Activated CD8-positive, alpha-beta memory T cell treated with anti-CD3 and anti-CD28 coated beads, Interleukin-2, amount 10 ng/mL, durations not matched to agents 7 days and 5 days (primary cell): ENCODE measurements at regions of chr1 and their contacts with region 1.

Region 1: DNA sequence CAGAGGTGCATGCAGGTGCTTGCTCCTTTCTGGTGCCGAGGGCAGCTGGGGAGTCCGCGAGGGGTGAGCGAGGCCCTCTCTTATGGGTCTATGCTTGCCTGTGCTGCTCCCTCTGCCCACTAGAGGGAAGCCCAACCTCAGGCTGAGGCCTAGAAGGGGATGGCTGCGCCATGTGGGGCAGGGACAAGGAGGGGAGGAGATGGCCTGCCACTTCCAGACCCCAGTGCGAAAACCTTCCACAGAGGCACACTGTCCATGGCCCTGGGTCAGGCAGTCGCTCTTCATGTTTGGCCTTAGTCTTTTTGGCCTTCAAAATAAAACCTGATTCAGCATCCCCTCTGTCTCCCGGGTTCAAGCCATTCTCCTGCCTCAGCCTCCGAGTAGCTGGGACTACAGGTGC is 14.0 kb downstream of the RHBG start:
- DNase-seq: peak; percentile 74
- ATAC-seq: peak; percentile 84
- H3K4me3 Mint-ChIP-seq: no peak overlapping the region
- H3K27ac Mint-ChIP-seq: no peak overlapping the region
- H3K4me1 Mint-ChIP-seq: peaks cover 6% of the 10 kb centered on the region
- H3K27me3 Mint-ChIP-seq: peaks cover 14% of the 10 kb centered on the region

Region 2: DNA sequence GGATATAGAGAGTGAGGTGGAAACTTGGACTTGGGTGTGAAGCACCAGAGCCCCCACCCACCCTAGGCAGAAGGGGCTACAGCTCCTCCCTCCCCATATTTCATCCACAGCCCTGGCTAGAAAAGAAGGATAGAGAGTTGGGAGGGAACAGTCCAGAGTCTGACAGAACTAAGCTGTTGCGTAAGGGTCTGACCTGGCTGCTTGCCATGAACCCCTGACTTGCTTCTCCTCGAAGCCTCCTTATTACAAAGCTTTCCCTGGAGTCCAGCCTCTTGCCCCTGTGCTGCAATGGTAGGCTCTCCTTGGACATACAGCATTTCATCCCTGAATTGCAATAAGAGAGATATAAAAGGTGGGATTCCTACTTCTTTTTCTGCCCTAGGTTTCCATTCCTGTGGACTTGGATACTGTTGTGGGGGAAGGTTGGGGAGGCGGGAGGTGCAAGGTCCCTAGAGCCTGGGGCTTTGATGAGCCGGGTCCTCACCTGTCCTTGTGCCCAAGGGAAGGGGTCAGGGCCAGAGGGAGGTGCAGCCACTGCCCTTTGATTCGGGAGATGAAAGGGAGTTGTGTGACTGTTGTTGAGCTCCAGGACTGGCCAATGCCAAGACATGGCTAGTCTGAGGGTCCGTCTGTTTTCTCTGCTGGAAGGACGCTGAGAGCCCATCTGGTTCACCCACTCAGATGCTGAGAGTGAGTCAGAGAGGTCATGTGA is 11.3 kb before region 1 on chr1:
- CTCF ChIA-PET with region 1: interaction called, 40 read pairs
- DNase-seq: no peak
- ATAC-seq: no peak
- H3K4me3 Mint-ChIP-seq: no peak overlapping the region
- H3K27ac Mint-ChIP-seq: no peak overlapping the region
- H3K4me1 Mint-ChIP-seq: peaks cover 3% of the 10 kb centered on the region
- H3K27me3 Mint-ChIP-seq: peaks cover 56% of the 10 kb centered on the region

Region 3: GRCh38 chr1:156414461-156415064 is 31.5 kb after region 1 on chr1:
- CTCF ChIA-PET with region 1: interaction called, 42 read pairs
- DNase-seq: no peak
- ATAC-seq: no peak
- H3K4me3 Mint-ChIP-seq: no peak overlapping the region
- H3K27ac Mint-ChIP-seq: no peak overlapping the region
- H3K4me1 Mint-ChIP-seq: peaks cover under 1% of the 10 kb centered on the region
- H3K27me3 Mint-ChIP-seq: peaks cover 65% of the 10 kb centered on the region

Region 4: GRCh38 chr1:156445789-156446263 is 62.8 kb after region 1 on chr1:
- CTCF ChIA-PET with region 1: interaction called, 463 read pairs
- DNase-seq: peak; percentile 86
- ATAC-seq: peak; percentile 84
- H3K4me3 Mint-ChIP-seq: no peak overlapping the region
- H3K27ac Mint-ChIP-seq: no peak overlapping the region
- H3K4me1 Mint-ChIP-seq: peaks cover 15% of the 10 kb centered on the region
- H3K27me3 Mint-ChIP-seq: peaks cover 58% of the 10 kb centered on the region

Region 5: GRCh38 chr1:156480411-156481192 is 97.6 kb after region 1 on chr1:
- CTCF ChIA-PET with region 1: interaction called, 16 read pairs
- DNase-seq: peak; percentile 88
- ATAC-seq: peak; percentile 89
- H3K4me3 Mint-ChIP-seq: peak overlapping the region; percentile 42
- H3K27ac Mint-ChIP-seq: peak overlapping the region; percentile 72
- H3K4me1 Mint-ChIP-seq: peaks cover 71% of the 10 kb centered on the region
- H3K27me3 Mint-ChIP-seq: no peaks in the 10 kb centered on the region

Region 6: GRCh38 chr1:156608036-156608674 is 225.1 kb after region 1 on chr1:
- CTCF ChIA-PET with region 1: interaction called, 60 read pairs
- DNase-seq: peak; percentile 81
- ATAC-seq: peak; percentile 94
- H3K4me3 Mint-ChIP-seq: no peak overlapping the region
- H3K27ac Mint-ChIP-seq: no peak overlapping the region
- H3K4me1 Mint-ChIP-seq: peaks cover 11% of the 10 kb centered on the region
- H3K27me3 Mint-ChIP-seq: peaks cover 19% of the 10 kb centered on the region

Region 7: DNA sequence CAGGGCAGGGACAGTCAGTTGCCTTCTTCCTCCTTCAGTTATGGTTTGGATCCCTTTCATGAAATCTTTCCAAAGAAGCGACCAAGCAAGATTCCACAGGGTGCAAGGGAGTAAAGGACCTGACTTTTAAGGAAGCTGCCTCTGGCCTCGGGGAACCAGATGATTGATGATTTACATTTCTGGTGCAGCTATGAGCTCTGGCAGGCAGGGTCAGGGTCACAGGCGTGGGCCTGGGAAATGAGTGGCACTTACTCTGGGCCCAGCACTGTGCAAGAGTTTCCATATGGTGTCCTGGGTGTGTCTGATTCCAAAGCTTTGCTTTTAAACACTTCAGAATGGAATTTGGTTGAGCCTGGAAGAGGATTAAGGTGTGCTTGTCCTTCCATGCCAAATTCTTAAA is 329.6 kb after region 1 on chr1:
- CTCF ChIA-PET with region 1: no interaction called
- DNase-seq: no peak
- ATAC-seq: no peak
- H3K4me3 Mint-ChIP-seq: no peak overlapping the region
- H3K27ac Mint-ChIP-seq: no peak overlapping the region
- H3K4me1 Mint-ChIP-seq: peaks cover 2% of the 10 kb centered on the region
- H3K27me3 Mint-ChIP-seq: no peaks in the 10 kb centered on the region